HepG2 (cell line): ENCODE measurements at regions of chr1 and their contacts with region 1.

Region 1: GRCh38 chr1:23484253-23485001 is 448 bp upstream of the ASAP3 start:
- DNase-seq: peak; percentile 76
- ATAC-seq: peak; percentile 84
- H3K4me3 ChIP-seq: peak overlapping the region; percentile 75 to 86 (median 86); a peak in 5 of 6 replicates
- H3K27ac ChIP-seq: peak overlapping the region; percentile 30
- H3K4me1 ChIP-seq: peaks cover 63% of the 10 kb centered on the region
- H3K27me3 ChIP-seq: peaks cover 0 to 1% of the 10 kb centered on the region in 2 experiments; a peak in 1 of 5 replicates
- CTCF ChIP-seq: no peak
- EP300 ChIP-seq: no peak
- POLR2A ChIP-seq: no peak
- RAD21 ChIP-seq: no peak

Region 2: DNA sequence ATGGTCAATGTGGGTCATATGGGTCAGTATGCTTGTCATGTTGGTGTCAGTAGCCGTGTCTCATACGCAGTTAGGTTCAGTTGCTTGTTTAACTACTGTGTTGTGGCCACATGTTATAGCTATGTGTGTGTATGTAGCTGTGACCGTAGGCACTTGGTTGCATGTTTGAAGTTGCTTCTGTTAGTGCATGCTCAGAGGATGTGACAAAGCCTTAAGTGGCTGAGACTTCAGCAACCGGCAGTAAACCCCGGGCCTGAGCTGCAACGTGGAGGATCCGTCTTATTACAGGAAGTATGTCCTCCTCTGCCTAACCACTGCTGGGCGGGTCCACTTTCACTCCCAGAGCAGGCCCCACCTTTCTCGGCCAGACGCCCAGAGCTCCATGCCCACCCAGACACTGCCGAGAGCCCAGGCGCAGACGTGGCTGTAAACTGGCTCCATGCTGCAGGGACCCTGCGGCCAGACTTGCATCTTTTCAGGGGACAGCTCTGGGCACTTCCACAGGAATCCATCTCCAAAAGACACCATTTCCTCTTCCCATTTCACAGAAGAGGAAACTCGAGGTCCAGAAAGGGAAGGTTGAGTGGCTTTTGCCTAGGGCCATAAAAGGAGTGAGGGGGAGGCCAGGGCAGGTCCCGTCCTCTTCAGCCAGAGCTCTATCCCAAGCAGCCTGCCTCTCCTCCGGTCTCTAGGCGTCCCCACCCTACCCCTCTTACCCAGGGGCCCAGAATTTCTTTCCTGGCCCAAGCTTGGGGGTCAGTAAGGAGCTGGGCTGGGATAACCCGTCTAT is 62.0 kb before region 1 on chr1:
- CTCF ChIA-PET with region 1: no interaction called
- POLR2A ChIA-PET with region 1: interaction called, 14 read pairs
- in situ Hi-C with region 1: no loop called
- intact Hi-C with region 1: no loop called
- DNase-seq: no peak
- ATAC-seq: no peak
- H3K4me3 ChIP-seq: 0 out of 6 replicates have a peak overlapping the region, but pooled peaks of 1 of the 3 experiments have one; percentile 88
- H3K27ac ChIP-seq: peak overlapping the region; percentile 92
- H3K4me1 ChIP-seq: peaks cover 79% of the 10 kb centered on the region
- H3K27me3 ChIP-seq: no peaks in the 10 kb centered on the region
- CTCF ChIP-seq: no peak
- EP300 ChIP-seq: no peak
- POLR2A ChIP-seq: no peak
- RAD21 ChIP-seq: no peak

Region 3: GRCh38 chr1:23456226-23456625 is 28.2 kb before region 1 on chr1:
- CTCF ChIA-PET with region 1: no interaction called
- POLR2A ChIA-PET with region 1: interaction called, 24 read pairs
- in situ Hi-C with region 1: no loop called
- intact Hi-C with region 1: no loop called
- DNase-seq: no peak
- ATAC-seq: no peak
- H3K4me3 ChIP-seq: no peak overlapping the region
- H3K27ac ChIP-seq: no peak overlapping the region
- H3K4me1 ChIP-seq: peaks cover 74% of the 10 kb centered on the region
- H3K27me3 ChIP-seq: no peaks in the 10 kb centered on the region
- CTCF ChIP-seq: no peak
- EP300 ChIP-seq: no peak
- POLR2A ChIP-seq: no peak
- RAD21 ChIP-seq: no peak

Region 4: DNA sequence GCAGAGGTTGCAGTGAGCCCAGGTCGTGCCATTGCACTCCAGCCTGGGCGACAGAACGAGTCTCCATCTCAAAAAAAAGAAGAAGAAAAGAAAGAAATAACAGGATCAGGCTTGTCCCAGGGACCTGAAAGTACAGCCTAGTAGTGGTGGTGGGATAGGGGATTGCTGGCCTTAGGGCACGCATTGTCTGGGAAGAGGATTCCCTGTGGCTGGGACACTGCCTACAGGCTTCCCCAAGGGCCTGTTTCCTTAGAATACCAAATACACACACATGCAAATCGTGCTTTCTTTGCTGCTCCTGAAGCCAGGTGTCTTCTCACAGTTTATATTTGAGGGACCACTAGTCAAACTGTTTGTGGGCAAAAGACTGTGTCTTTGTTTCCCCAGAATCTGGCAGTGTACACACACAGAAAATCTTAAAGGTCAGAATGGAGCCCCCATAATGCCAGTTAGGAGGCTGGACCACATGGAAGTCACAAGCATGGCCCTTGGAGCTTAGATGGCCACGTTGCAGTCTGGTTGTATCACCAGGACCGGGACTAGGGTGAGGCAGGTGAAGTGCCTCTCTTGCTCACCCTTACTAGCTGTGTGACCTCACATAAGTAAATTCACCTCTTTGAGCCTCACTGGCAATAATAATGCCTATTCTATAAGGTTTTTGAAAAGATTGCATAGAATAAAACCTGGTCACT is 12.2 kb after region 1 on chr1:
- CTCF ChIA-PET with region 1: no interaction called
- POLR2A ChIA-PET with region 1: interaction called, 11 read pairs
- in situ Hi-C with region 1: no loop called
- intact Hi-C with region 1: no loop called
- DNase-seq: no peak
- ATAC-seq: peak; percentile 39
- H3K4me3 ChIP-seq: no peak overlapping the region
- H3K27ac ChIP-seq: no peak overlapping the region
- H3K4me1 ChIP-seq: peaks cover 35% of the 10 kb centered on the region
- H3K27me3 ChIP-seq: peaks cover 0 to 3% of the 10 kb centered on the region in 2 experiments; a peak in 1 of 5 replicates
- CTCF ChIP-seq: no peak
- EP300 ChIP-seq: no peak
- POLR2A ChIP-seq: no peak
- RAD21 ChIP-seq: no peak

Region 5: GRCh38 chr1:23634842-23635651 is 150.6 kb after region 1 on chr1:
- CTCF ChIA-PET with region 1: no interaction called
- POLR2A ChIA-PET with region 1: no interaction called
- in situ Hi-C with region 1: no loop called
- intact Hi-C with region 1: loop called (anchors 5 kb)
- DNase-seq: peak; percentile 53
- ATAC-seq: peak; percentile 63
- H3K4me3 ChIP-seq: peak overlapping the region; percentile 47 to 69 (median 67)
- H3K27ac ChIP-seq: no peak overlapping the region
- H3K4me1 ChIP-seq: peaks cover 27% of the 10 kb centered on the region
- H3K27me3 ChIP-seq: peaks cover 4 to 22% of the 10 kb centered on the region in 2 experiments; a peak in 4 of 5 replicates
- CTCF ChIP-seq: peak; percentile 80
- EP300 ChIP-seq: no peak
- POLR2A ChIP-seq: no peak
- RAD21 ChIP-seq: no peak